Common myeloid progenitor, CD34-positive (primary cell): ENCODE measurements at regions of chr5 and their contacts with region 1.

Region 1: GRCh38 chr5:128201065-128201926 is 117.7 kb downstream of the SLC12A2 start:
- DNase-seq: peak; percentile 64 to 77 (median 77)
- H3K4me3 ChIP-seq: peak overlapping the region in 6 of 7 experiments; percentile 27 to 70 (median 42)
- H3K27ac ChIP-seq: no peak overlapping the region
- H3K4me1 ChIP-seq: peaks cover 0 to 16% (median 7%) of the 10 kb centered on the region in 4 experiments
- H3K27me3 ChIP-seq: no peaks in the 10 kb centered on the region

Region 2: GRCh38 chr5:127564002-127564769 is 637.1 kb before region 1 on chr5:
- CTCF ChIA-PET with region 1: interaction called, 48 read pairs
- POLR2A ChIA-PET with region 1: no interaction called
- DNase-seq: peak; percentile 81 to 87 (median 81)
- H3K4me3 ChIP-seq: no peak overlapping the region
- H3K27ac ChIP-seq: no peak overlapping the region
- H3K4me1 ChIP-seq: peaks cover 19 to 66% (median 40%) of the 10 kb centered on the region in 4 experiments
- H3K27me3 ChIP-seq: no peaks in the 10 kb centered on the region

Region 3: DNA sequence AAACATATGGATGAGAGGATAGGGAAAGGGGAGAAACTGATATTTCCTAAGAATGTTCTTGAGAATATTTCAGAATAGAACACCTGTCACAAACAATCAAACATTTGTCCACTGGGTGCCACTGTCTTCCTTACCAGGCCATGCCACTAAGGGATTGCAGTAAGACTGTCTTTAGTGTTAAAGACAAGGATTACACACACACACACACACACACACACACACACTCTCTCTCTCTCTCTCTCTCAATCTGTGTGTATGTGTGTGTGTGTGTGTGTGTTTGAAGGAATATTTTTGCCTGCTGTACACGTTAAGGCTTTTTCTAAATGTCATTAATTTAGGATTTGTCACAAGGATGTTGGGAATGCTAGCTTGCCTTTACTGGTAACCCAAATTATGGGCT is 443.7 kb before region 1 on chr5:
- CTCF ChIA-PET with region 1: interaction called, 25 read pairs
- POLR2A ChIA-PET with region 1: no interaction called
- DNase-seq: peak; percentile 71 to 84 (median 81)
- H3K4me3 ChIP-seq: no peak overlapping the region
- H3K27ac ChIP-seq: no peak overlapping the region
- H3K4me1 ChIP-seq: no peaks in the 10 kb centered on the region
- H3K27me3 ChIP-seq: no peaks in the 10 kb centered on the region

Region 4: DNA sequence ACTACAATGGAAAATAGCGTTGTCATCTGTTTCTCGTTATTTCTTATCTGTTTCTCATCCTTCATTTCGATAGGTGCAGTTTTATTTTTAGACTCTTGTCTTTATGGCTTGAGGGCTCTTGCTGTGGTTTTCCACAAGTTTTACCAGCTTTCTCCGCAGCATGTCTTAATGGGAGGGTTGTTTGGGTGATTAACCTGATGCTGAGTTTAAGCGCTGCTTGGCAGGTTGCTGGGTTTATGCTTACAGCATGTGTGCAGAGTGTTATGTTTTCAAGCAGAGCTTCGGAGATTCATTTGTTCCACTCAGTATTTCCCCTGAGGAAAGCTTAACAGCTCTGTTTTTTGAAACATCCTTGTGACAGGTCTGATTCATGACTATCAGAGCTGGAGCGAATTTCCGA is 36.2 kb after region 1 on chr5:
- CTCF ChIA-PET with region 1: no interaction called
- POLR2A ChIA-PET with region 1: no interaction called
- DNase-seq: no peak
- H3K4me3 ChIP-seq: no peak overlapping the region
- H3K27ac ChIP-seq: no peak overlapping the region
- H3K4me1 ChIP-seq: no peaks in the 10 kb centered on the region
- H3K27me3 ChIP-seq: peaks cover 0 to 2% (median 0%) of the 10 kb centered on the region in 5 experiments